Psoas muscle (tissue), 8 donors: ENCODE measurements at regions of chr13 and their contacts with region 1.

Region 1: GRCh38 chr13:59677966-59678814 is 485.5 kb downstream of the DIAPH3 start:
- DNase-seq: no peak
- ATAC-seq: peak in 3 of 4 donors; percentile 57 to 76 (median 74)
- H3K4me3 ChIP-seq: no peak overlapping the region
- H3K27ac ChIP-seq: no peak overlapping the region
- H3K4me1 ChIP-seq: peaks cover 4% of the 10 kb centered on the region
- H3K27me3 ChIP-seq: no peaks in the 10 kb centered on the region
- CTCF ChIP-seq: peak; percentile 61

Region 2: DNA sequence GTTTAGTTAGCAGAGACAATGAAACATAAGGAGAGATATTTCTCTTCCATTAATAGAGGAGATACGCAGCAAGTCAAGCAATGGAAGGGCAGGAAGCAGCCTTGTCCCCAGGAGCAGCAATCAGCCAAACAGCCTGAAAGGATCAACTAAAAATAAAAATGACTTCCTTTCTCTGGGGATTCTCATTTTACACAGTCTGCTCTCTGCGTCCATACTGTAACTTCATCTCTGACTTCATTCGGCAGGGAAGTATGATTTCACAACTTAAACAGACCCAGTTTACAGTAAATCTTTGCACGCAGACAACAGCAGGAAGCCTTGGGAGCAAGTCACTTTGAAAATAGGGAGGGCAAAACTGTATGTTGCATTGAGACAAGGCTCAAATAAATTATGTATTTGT is 341.1 kb before region 1 on chr13:
- intact Hi-C with region 1: loop called in 1 of 2 experiments (anchors 10 kb)
- DNase-seq: no peak
- ATAC-seq: peak; percentile 79 to 98 (median 92)
- H3K4me3 ChIP-seq: no peak overlapping the region
- H3K27ac ChIP-seq: peak overlapping the region; percentile 62
- H3K4me1 ChIP-seq: no peaks in the 10 kb centered on the region
- H3K27me3 ChIP-seq: no peaks in the 10 kb centered on the region
- CTCF ChIP-seq: no peak

Region 3: GRCh38 chr13:59837101-59837500 is 158.9 kb after region 1 on chr13:
- intact Hi-C with region 1: no loop called
- DNase-seq: no peak
- ATAC-seq: no peak
- H3K4me3 ChIP-seq: no peak overlapping the region
- H3K27ac ChIP-seq: no peak overlapping the region
- H3K4me1 ChIP-seq: no peaks in the 10 kb centered on the region
- H3K27me3 ChIP-seq: no peaks in the 10 kb centered on the region
- CTCF ChIP-seq: no peak